Activated B cell treated with CpG ODN at 0.5 μM for 24 hours (primary cell): ENCODE measurements at regions of chr9 and their contacts with region 1.

Region 1: GRCh38 chr9:127910613-127911205 is 6.1 kb downstream of the ST6GALNAC4 start:
- DNase-seq: no peak
- ATAC-seq: no peak
- H3K4me3 Mint-ChIP-seq: peak overlapping the region; percentile 73
- H3K27ac Mint-ChIP-seq: peak overlapping the region; percentile 96
- H3K4me1 Mint-ChIP-seq: peaks cover 73% of the 10 kb centered on the region
- H3K27me3 Mint-ChIP-seq: no peaks in the 10 kb centered on the region
- CTCF ChIP-seq: no peak

Region 2: DNA sequence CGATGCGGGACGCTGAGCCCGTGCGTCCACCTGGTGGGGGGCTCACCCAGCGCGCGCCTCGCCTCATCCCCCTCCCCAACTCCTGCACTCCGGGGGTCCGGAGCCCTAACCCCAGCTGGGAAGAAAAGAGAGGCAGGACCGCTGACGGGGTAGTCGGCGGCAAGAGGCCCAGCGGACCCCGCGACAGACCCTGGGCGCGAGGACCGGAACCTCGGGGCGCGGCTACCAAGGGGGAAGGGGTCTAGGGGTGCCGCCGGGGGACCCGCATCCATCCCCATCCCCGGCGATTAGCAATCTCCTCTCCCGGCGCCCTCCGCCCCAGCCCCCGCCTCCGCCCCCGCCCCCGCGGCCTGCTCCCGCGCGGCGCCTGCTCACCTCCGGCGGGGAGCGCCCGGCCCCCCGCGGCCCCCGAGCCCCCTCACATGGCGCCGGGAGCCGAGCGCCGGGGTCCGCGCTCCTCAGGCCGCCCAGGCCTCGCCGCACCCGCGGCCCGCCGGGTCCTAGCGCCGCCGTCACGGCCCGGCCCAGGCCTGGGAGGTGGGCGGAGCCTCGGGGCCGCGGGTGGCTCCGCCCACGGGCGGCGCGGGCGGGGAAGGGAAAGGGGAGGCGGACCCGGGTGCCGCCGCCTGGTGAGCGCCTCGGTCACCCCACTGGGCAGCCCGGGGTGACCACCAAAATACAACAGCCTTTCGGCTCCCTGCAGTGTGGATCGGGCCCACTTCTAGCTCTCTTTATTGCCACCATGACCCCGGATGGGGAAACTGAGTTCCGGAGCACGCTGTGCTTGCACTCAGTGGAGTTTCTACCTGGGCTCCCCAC is 11.4 kb before region 1 on chr9 and contains the start of gene ST6GALNAC6:
- CTCF ChIA-PET with region 1: interaction called, 6 read pairs
- POLR2A ChIA-PET with region 1: interaction called, 457 read pairs
- intact Hi-C with region 1: no loop called
- DNase-seq: peak; percentile 84
- ATAC-seq: peak; percentile 81
- H3K4me3 Mint-ChIP-seq: peak within 1 kb of the TSS; percentile 88
- H3K27ac Mint-ChIP-seq: peak within 1 kb of the TSS; percentile 76
- H3K4me1 Mint-ChIP-seq: peaks cover 55% of the 10 kb centered on the region
- H3K27me3 Mint-ChIP-seq: no peaks in the 10 kb centered on the region
- CTCF ChIP-seq: no peak
- total RNA-seq, gene ST6GALNAC6: 39.9 and 47.5 TPM in 2 replicates